GM18951 (cell line): ENCODE measurements at regions of chr6 and their contacts with region 1.

Region 1: GRCh38 chr6:100099189-100100074 is 105.4 kb upstream of the MCHR2 start:
- POLR2A ChIP-seq: no peak

Region 2: GRCh38 chr6:100001915-100002388 is 97.5 kb before region 1 on chr6:
- in situ Hi-C with region 1: loop called (anchors 10 kb)
- POLR2A ChIP-seq: no peak